HCT116 (cell line): ENCODE measurements at regions of chr12 and their contacts with region 1.

Region 1: DNA sequence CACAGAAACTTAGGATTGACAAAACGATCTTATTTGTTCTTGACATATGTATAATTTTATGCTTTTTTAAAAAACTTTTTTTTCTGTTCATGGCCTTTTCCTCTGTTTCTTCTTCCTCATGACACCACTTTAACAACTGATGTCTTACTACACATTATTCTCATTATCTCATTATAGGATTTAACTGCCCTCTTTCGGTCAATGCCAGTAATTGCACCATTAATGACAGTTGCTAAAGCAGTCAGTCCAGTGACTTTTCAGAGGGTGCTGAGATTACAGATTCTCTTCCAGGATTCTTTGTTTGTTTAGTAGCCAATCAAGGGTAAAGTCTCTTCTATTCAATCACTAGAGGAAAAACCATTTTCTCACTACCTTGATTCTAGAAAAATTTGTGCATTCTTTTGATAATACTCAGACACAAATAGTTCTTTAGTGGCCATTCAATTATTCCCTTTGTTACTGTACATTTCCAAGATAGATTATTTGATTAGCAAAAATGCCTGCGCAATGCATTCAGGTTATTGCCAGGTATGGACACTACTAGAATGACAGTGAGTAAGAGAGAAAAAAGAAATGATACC is 50.1 kb downstream of the KLRG1 start:
- DNase-seq: peak; percentile 18
- ATAC-seq: peak; percentile 84
- H3K4me3 ChIP-seq: no peak overlapping the region
- H3K27ac ChIP-seq: no peak overlapping the region
- H3K4me1 ChIP-seq: no peaks in the 10 kb centered on the region
- H3K27me3 ChIP-seq: 0 out of 2 replicates have a peak, but pooled peaks cover 4% of the 10 kb centered on the region
- CTCF ChIP-seq: peak; percentile 55 to 77 (median 57); a peak in 5 of 6 replicates
- POLR2A ChIP-seq: no peak
- RAD21 ChIP-seq: peak; percentile 78

Region 2: DNA sequence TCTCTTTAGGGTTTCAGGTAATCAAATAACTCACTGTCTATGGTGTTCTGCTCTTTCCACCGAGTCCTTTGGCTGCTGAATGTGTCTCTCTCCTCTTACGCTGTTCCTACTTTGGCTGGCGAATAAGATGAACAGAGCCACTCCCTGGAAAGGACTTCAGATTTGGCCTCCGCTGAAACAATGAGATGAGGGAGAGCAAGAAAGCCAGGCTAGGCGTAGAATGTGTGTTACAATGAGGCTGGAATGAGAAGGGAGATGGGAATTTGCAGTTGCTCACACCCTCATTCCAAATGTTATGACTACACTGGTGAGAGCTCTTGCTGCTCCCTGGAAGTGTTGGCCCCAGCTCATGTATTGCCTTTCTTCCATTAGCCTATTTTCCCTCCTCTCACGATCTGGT is 376.9 kb before region 1 on chr12 and contains the start of gene MFAP5:
- CTCF ChIA-PET with region 1: interaction called, 13 read pairs
- POLR2A ChIA-PET with region 1: no interaction called
- RAD21 ChIA-PET with region 1: no interaction called
- intact Hi-C with region 1: no loop called
- DNase-seq: no peak
- ATAC-seq: no peak
- H3K4me3 ChIP-seq: no peak within 1 kb of the TSS
- H3K27ac ChIP-seq: no peak within 1 kb of the TSS
- H3K4me1 ChIP-seq: 0 out of 4 replicates have a peak, but pooled peaks cover 0 to 3% of the 10 kb centered on the region in 2 experiments
- H3K27me3 ChIP-seq: peaks cover 16% of the 10 kb centered on the region
- CTCF ChIP-seq: no peak
- POLR2A ChIP-seq: no peak
- RAD21 ChIP-seq: no peak
- total RNA-seq, gene MFAP5: not detected

Region 3: GRCh38 chr12:8681041-8681902 is 358.2 kb before region 1 on chr12:
- CTCF ChIA-PET with region 1: no interaction called
- POLR2A ChIA-PET with region 1: no interaction called
- RAD21 ChIA-PET with region 1: no interaction called
- intact Hi-C with region 1: loop called (anchors 1 kb)
- DNase-seq: no peak
- ATAC-seq: 0 out of 2 replicates have a peak, but pooled peaks have one; percentile 11
- H3K4me3 ChIP-seq: no peak overlapping the region
- H3K27ac ChIP-seq: no peak overlapping the region
- H3K4me1 ChIP-seq: peaks cover 2% of the 10 kb centered on the region in 2 experiments; a peak in 1 of 4 replicates
- H3K27me3 ChIP-seq: no peaks in the 10 kb centered on the region
- CTCF ChIP-seq: no peak
- POLR2A ChIP-seq: no peak
- RAD21 ChIP-seq: no peak

Region 4: GRCh38 chr12:8780389-8780788 is 259.1 kb before region 1 on chr12:
- CTCF ChIA-PET with region 1: no interaction called
- POLR2A ChIA-PET with region 1: no interaction called
- RAD21 ChIA-PET with region 1: no interaction called
- intact Hi-C with region 1: loop called (anchors 5 kb)
- DNase-seq: peak; percentile 18
- ATAC-seq: peak; percentile 88
- H3K4me3 ChIP-seq: no peak overlapping the region
- H3K27ac ChIP-seq: no peak overlapping the region
- H3K4me1 ChIP-seq: no peaks in the 10 kb centered on the region
- H3K27me3 ChIP-seq: 0 out of 2 replicates have a peak, but pooled peaks cover 13% of the 10 kb centered on the region
- CTCF ChIP-seq: peak; percentile 27 to 49 (median 43); a peak in 5 of 6 replicates
- POLR2A ChIP-seq: no peak
- RAD21 ChIP-seq: peak; percentile 58